Activated T-helper 1 cell treated with anti-CD3 and anti-CD28 coated beads, Interleukin-12 subunit alpha, Interleukin-12 subunit beta, Interleukin-2, Interleukin-4 antibody, amounts not matched to agents 30 ng/mL and 10 ng/mL and 1 ng/mL, durations not matched to agents 14 hours and 24 hours and 36 hours (primary cell): ENCODE measurements at regions of chr6 and their contacts with region 1.

Region 1: DNA sequence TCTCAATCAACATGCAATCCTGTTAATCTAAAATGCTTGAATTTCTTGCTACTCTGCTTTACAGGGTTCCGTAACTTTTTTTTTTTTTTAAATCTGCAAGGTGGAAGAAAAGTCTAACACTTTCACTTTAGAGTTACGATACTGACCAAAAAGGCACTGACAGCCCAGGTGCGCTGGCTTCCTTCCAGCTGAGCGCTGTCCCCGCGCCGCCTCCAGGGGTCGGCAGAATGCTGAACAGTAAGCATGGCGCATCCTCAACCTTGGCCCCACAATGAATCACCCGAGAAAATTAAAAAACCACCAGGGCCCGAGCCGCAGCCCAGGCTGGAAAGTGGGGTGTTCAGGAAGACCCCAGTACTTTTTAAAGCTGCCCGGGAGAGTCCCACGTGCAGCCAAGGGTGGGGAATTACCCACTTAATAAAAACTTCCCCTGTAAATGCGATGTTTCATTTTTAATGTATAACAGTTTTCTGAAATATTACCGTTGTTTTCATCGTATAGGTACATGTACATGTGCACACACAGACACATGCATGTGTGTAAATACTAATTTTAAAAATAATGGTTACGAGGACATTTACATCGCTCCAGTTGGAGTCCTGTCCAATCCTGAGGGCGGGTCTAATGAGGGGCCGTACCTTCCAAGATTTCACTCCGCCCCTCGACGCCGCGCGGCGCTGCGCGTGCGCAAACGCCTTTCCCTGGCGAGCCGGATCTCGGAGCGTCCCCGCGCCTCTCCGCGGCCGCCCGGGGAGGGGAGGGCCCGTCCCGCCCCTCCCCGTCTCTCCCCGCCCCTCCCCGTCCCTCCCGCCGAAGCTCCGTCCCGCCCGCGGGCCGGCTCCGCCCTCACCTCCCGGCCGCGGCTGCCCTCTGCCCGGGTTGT is at the start of gene GINM1:
- DNase-seq: peak; percentile 97
- H3K4me3 Mint-ChIP-seq: peak within 1 kb of the TSS; percentile 92
- H3K27ac Mint-ChIP-seq: peak within 1 kb of the TSS; percentile 94
- H3K4me1 Mint-ChIP-seq: peaks cover 17% of the 10 kb centered on the region
- H3K27me3 Mint-ChIP-seq: peaks cover 7% of the 10 kb centered on the region
- total RNA-seq, gene GINM1: 15.4 and 18.6 TPM in 2 replicates

Region 2: DNA sequence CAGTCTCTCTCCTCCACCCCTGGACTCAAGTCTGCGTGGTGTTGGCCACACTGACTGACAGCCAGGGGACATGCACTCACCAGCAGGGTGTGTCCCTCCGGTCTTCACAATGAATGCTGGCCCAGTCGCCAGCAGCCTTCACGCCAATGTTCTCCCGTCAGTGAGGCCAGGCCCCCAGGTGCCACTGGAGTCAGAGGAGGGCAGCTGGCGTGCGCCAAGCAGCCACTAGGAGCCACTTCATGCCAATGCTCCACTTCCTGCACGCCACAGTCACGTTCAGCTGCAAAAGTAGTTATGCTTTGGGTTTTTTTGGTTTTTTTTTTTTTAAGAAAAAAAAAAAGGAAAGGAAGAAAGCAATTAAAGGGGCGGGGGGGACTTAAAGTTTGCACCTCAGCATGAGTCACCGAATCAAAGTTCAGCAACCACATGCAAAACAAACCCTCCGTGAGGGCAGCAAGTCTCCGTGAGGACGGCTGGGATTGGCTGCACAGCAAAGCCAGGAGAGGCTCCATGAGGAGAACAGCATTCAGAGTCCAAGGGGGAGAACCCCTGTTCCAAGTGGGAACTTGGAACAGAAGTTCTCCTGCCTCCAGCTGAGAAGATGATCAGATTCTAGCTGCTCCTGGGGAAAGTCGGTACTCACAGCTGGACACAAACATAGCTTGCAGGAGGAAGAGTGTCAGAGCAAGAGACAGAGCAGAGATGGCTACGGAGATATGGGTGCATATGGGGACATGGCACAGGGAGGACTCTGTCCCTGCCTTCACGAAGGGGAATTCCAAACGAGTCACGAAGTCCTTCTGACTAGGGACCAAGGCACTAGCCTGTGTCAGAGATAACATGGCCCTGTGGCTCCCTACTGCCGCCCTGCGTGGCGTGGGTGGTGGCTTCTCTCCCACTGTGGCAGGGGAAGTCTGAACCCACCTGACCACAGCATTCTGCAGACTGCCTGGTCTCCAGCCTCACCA is 80.8 kb before region 1 on chr6 and contains the start of gene ZC3H12D:
- intact Hi-C with region 1: loop called (anchors 1 kb)
- DNase-seq: peak; percentile 76
- H3K4me3 Mint-ChIP-seq: peak within 1 kb of the TSS; percentile 92
- H3K27ac Mint-ChIP-seq: peak within 1 kb of the TSS; percentile 99
- H3K4me1 Mint-ChIP-seq: peaks cover 74% of the 10 kb centered on the region
- H3K27me3 Mint-ChIP-seq: no peaks in the 10 kb centered on the region
- total RNA-seq, gene ZC3H12D: 94.7 and 96.7 TPM in 2 replicates

Region 3: DNA sequence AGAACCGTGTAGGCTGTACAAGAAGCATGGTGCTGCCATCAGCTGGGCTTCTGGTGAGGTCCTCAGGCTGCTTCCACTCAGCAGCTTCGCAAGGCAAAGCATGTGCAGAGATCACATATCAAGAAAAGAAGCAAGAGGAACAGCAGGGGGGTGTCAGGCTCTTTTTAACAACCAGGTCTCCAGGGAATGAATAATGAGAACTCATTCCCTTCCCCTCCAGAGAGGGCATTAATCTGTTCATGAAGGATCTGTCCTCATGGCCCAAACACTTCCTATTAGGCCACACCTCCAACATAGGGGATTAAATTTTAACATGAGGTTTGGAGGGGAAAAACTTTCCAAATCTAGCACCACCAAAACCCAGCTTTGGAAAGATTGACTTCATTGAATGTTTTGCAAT is 20.4 kb after region 1 on chr6:
- intact Hi-C with region 1: no loop called
- DNase-seq: no peak
- H3K4me3 Mint-ChIP-seq: no peak overlapping the region
- H3K27ac Mint-ChIP-seq: no peak overlapping the region
- H3K4me1 Mint-ChIP-seq: no peaks in the 10 kb centered on the region
- H3K27me3 Mint-ChIP-seq: no peaks in the 10 kb centered on the region

Region 4: GRCh38 chr6:149648148-149649145 is 82.7 kb after region 1 on chr6 and contains the start of gene KATNA1:
- intact Hi-C with region 1: loop called (anchors 1 kb)
- DNase-seq: peak; percentile 89
- H3K4me3 Mint-ChIP-seq: peak within 1 kb of the TSS; percentile 96
- H3K27ac Mint-ChIP-seq: peak within 1 kb of the TSS; percentile 83
- H3K4me1 Mint-ChIP-seq: peaks cover 31% of the 10 kb centered on the region
- H3K27me3 Mint-ChIP-seq: no peaks in the 10 kb centered on the region
- total RNA-seq, gene KATNA1: 20.8 and 22.1 TPM in 2 replicates

Region 5: GRCh38 chr6:149717588-149718458 is 152.1 kb after region 1 on chr6 and contains the start of gene LATS1:
- intact Hi-C with region 1: loop called (anchors 1 kb)
- DNase-seq: peak; percentile 90
- H3K4me3 Mint-ChIP-seq: peak within 1 kb of the TSS; percentile 93
- H3K27ac Mint-ChIP-seq: peak within 1 kb of the TSS; percentile 91
- H3K4me1 Mint-ChIP-seq: peaks cover 31% of the 10 kb centered on the region
- H3K27me3 Mint-ChIP-seq: no peaks in the 10 kb centered on the region
- total RNA-seq, gene LATS1: 33.1 and 34.0 TPM in 2 replicates

Region 6: GRCh38 chr6:149746147-149746946 is 180.6 kb after region 1 on chr6 and contains the start of gene NUP43:
- intact Hi-C with region 1: loop called (anchors 1 kb)
- DNase-seq: peak; percentile 90
- H3K4me3 Mint-ChIP-seq: peak within 1 kb of the TSS; percentile 99
- H3K27ac Mint-ChIP-seq: peak within 1 kb of the TSS; percentile 87
- H3K4me1 Mint-ChIP-seq: peaks cover 31% of the 10 kb centered on the region
- H3K27me3 Mint-ChIP-seq: no peaks in the 10 kb centered on the region
- total RNA-seq, gene NUP43: 81.3 and 90.5 TPM in 2 replicates

Region 7: DNA sequence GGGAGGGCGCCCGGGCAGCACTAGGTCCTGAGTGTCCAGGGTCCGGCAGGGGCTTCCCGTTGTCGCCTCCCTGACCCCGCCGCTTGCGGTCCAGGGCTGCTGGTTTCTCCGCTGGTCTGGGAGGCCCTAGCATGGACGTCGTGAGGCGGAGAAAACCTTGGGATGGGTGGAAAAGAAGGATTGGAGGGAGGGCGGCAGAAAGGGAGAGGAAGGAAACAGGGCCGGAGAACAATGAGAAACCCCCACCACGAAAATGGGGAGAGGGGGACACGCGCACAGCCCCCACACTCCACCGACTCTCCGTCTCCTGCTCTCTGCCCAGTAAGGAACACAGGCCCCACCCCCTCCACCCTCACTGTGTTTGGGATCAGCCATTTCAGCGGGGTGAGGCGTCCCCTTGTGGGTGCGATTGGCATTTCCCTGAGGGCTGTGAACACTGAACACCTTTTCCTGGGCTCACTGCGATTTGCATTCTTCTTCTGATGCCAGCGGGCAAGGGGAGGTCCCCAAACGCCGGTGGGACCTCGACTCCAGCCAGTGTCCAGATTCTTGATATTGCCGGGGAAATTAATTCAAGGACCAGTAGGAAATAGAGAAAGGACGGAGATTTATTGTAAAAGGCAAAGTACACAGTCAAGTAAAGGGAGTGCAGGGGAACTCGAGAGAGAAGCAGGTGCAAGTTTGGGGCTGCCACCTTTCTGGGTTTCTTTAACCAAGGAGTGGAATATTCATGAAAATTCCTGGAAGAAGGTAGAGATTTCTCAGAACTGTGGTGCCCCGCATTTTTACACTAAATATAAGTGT is 360.4 kb after region 1 on chr6:
- intact Hi-C with region 1: loop called (anchors 5 kb)
- DNase-seq: peak; percentile 69
- H3K4me3 Mint-ChIP-seq: peak overlapping the region; percentile 28
- H3K27ac Mint-ChIP-seq: no peak overlapping the region
- H3K4me1 Mint-ChIP-seq: peaks cover 15% of the 10 kb centered on the region
- H3K27me3 Mint-ChIP-seq: peaks cover 87% of the 10 kb centered on the region

Region 8: GRCh38 chr6:150865406-150866146 is 1299.8 kb after region 1 on chr6 and contains the start of gene MTHFD1L:
- intact Hi-C with region 1: loop called (anchors 5 kb)
- DNase-seq: peak; percentile 74
- H3K4me3 Mint-ChIP-seq: peak within 1 kb of the TSS; percentile 86
- H3K27ac Mint-ChIP-seq: peak within 1 kb of the TSS; percentile 91
- H3K4me1 Mint-ChIP-seq: peaks cover 38% of the 10 kb centered on the region
- H3K27me3 Mint-ChIP-seq: peaks cover 2% of the 10 kb centered on the region
- total RNA-seq, gene MTHFD1L: 121 and 125 TPM in 2 replicates